Activated naive CD4-positive, alpha-beta T cell treated with anti-CD3 and anti-CD28 coated beads, Interleukin-2, amount 10 ng/mL, durations not matched to agents 7 days and 5 days (primary cell): ENCODE measurements at regions of chr19 and their contacts with region 1.

Region 1: GRCh38 chr19:35693830-35694599 is 10.3 kb upstream of the ZBTB32 start:
- DNase-seq: peak; percentile 94
- H3K4me3 Mint-ChIP-seq: no peak overlapping the region
- H3K27ac Mint-ChIP-seq: no peak overlapping the region
- H3K4me1 Mint-ChIP-seq: peaks cover 20% of the 10 kb centered on the region
- H3K27me3 Mint-ChIP-seq: peaks cover 9% of the 10 kb centered on the region

Region 2: DNA sequence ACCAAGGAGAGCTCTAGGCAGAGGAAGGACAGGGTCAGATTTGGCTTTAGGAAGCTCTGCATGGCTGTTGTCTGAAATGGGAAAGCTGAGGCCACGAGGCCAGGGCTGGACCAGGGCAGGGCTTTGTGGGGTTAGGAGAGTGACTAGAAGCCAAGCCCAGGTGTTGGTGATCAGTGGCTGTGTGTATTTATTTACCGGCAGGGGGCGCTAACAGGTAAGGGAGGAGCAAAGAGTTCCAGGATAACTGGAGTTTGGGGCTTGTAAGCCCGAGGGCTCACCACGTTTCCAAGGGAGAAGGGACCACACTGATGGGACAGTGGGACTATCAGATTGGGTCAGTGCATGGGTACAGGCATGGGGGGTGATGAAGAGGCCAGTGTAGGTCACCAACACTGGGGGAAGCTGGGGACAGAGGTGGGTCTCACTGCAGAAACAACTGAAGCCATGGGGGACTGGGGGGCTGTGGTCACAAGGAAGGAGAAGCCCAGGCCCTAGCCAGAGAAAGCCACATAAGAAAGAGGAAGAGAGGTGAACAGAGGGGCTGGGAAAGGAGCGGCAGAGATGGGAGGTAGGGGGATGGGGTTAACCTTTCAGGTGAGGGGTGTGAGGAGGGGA is 144.7 kb before region 1 on chr19:
- CTCF ChIA-PET with region 1: interaction called, 17 read pairs
- DNase-seq: peak; percentile 71
- H3K4me3 Mint-ChIP-seq: no peak overlapping the region
- H3K27ac Mint-ChIP-seq: no peak overlapping the region
- H3K4me1 Mint-ChIP-seq: peaks cover 32% of the 10 kb centered on the region
- H3K27me3 Mint-ChIP-seq: peaks cover 8% of the 10 kb centered on the region

Region 3: GRCh38 chr19:35708402-35708801 is 14.4 kb after region 1 on chr19:
- CTCF ChIA-PET with region 1: interaction called, 236 read pairs
- DNase-seq: no peak
- H3K4me3 Mint-ChIP-seq: no peak overlapping the region
- H3K27ac Mint-ChIP-seq: no peak overlapping the region
- H3K4me1 Mint-ChIP-seq: peaks cover 41% of the 10 kb centered on the region
- H3K27me3 Mint-ChIP-seq: peaks cover 9% of the 10 kb centered on the region

Region 4: DNA sequence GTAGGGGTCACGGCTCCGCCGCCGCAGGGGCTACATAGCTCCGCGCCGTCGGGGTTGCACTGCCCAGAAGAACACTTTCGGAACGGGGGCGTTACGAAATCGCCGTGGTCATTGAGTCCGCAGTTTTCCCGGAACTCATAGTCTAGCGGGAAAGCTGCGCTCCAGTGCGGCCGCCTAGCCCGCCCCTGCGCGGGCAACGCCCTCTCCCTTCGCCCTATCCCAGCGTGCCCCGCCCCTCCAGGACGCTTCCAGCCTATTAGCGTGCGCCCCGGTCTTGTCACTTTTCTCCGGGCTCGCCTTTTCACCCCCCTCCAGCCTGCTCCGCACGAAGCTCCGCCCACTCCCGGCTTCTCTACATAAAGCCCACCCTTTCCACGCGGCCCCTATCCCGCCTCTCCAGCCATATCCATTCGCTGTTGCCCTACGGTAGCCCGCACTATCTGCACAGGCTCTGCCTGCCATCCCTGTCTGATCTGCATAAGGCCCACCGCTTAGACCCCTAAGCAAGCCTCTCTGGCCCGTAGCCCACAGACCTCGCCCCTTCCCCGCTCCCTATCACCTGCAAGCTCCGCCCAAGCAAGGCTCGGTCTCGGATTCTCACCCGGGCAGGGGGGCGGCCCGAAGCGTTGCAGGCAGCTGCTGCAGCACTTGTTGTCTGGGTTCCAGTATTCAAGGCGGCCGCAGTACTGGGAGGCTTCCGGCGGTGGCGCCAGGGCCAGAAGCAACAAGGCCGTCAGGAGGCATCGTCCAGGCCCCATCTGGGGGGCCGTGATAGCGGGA is 46.6 kb after region 1 on chr19:
- CTCF ChIA-PET with region 1: interaction called, 11 read pairs
- DNase-seq: peak; percentile 99
- H3K4me3 Mint-ChIP-seq: peak overlapping the region; percentile 90
- H3K27ac Mint-ChIP-seq: peak overlapping the region; percentile 99
- H3K4me1 Mint-ChIP-seq: peaks cover 57% of the 10 kb centered on the region
- H3K27me3 Mint-ChIP-seq: no peaks in the 10 kb centered on the region

Region 5: DNA sequence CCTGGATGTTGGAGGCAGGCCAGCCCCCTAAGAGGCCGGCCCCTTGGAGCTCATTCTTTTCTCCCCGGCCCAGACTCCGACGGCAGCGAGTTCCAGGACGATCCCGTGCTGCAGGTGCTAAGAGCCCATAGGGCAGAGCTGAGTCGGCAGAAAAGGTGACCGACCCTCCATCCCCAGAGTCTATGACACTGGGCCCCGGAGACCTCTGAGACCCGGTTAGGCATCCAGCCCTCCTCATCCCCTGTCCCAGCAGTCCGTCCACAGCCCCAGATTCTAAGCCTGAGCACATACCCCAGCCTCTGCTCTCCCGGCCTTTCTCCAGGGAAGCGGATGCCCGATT is 74.0 kb after region 1 on chr19:
- CTCF ChIA-PET with region 1: no interaction called
- DNase-seq: no peak
- H3K4me3 Mint-ChIP-seq: no peak overlapping the region
- H3K27ac Mint-ChIP-seq: no peak overlapping the region
- H3K4me1 Mint-ChIP-seq: peaks cover 3% of the 10 kb centered on the region
- H3K27me3 Mint-ChIP-seq: no peaks in the 10 kb centered on the region

Region 6: DNA sequence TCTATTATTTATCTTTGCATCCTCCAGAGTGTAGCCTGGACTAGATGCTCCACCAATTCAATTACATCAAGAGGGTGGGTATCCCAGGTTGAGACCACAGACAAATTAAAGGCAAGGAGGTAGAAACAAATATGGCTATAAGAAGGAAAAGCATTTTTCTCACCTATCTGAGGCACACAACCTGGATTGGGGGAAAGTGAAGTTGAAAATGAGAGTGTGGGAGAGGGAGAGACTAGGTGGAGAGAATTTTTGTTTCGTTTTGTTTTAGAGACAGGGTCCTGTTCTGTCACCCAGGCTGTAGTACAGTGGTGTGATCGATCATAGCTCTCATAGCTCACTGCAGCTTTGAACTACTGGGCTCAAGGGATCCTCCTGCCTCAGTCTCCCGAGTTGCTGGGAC is 124.4 kb after region 1 on chr19:
- CTCF ChIA-PET with region 1: interaction called, 27 read pairs
- DNase-seq: no peak
- H3K4me3 Mint-ChIP-seq: no peak overlapping the region
- H3K27ac Mint-ChIP-seq: no peak overlapping the region
- H3K4me1 Mint-ChIP-seq: no peaks in the 10 kb centered on the region
- H3K27me3 Mint-ChIP-seq: peaks cover 32% of the 10 kb centered on the region